B cell (primary cell): ENCODE measurements at regions of chr13 and their contacts with region 1.

Region 1: GRCh38 chr13:114025714-114026431 is 52.0 kb upstream of the C13orf46 start:
- DNase-seq: no peak
- ATAC-seq: no peak
- H3K4me3 ChIP-seq: no peak overlapping the region
- H3K4me3 Mint-ChIP-seq: peak overlapping the region; percentile 63
- H3K27ac ChIP-seq: peak overlapping the region in 1 of 2 donors; percentile 3
- H3K27ac Mint-ChIP-seq: peak overlapping the region; percentile 65
- H3K4me1 ChIP-seq: peaks cover 27 to 62% of the 10 kb centered on the region in 2 donors
- H3K4me1 Mint-ChIP-seq: peaks cover 53% of the 10 kb centered on the region
- H3K27me3 ChIP-seq: no peaks in the 10 kb centered on the region
- H3K27me3 Mint-ChIP-seq: no peaks in the 10 kb centered on the region
- CTCF ChIP-seq: no peak

Region 2: DNA sequence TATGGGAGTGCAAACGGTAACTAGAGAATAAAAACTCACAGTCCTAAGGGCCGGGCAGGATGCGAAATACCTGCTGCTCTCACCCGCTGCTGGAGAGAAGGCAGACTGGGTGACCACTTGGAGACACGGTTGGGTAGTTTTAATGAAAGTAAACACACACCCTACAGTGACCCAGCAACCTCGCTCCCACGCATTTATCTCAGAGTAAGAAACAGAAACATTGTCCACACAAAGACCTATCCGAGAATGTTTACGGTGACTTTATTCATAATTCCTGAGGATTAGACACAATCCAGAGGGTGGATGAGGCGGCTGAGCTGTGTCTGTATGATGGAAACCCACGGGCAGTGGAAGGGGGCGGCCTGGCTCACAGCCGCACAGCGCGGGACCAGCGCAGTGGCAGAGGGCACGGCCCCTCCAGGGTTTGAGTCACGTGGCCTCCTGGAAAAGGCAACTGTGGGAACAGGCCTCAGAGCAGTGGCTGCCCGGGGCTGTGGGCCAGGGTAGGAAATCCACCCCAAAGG is 21.5 kb after region 1 on chr13:
- CTCF ChIA-PET with region 1: interaction called, 4 read pairs
- POLR2A ChIA-PET with region 1: interaction called, 11 read pairs
- intact Hi-C with region 1: loop called (anchors 1 kb)
- DNase-seq: no peak
- ATAC-seq: peak; percentile 31
- H3K4me3 ChIP-seq: peak overlapping the region in 2 of 5 experiments; percentile 7 to 27
- H3K4me3 Mint-ChIP-seq: peak overlapping the region; percentile 73
- H3K27ac ChIP-seq: peak overlapping the region in 1 of 2 donors; percentile 26
- H3K27ac Mint-ChIP-seq: peak overlapping the region; percentile 89
- H3K4me1 ChIP-seq: peaks cover 41 to 70% of the 10 kb centered on the region in 2 donors
- H3K4me1 Mint-ChIP-seq: peaks cover 71% of the 10 kb centered on the region
- H3K27me3 ChIP-seq: no peaks in the 10 kb centered on the region
- H3K27me3 Mint-ChIP-seq: no peaks in the 10 kb centered on the region
- CTCF ChIP-seq: no peak